HepG2 (cell line): ENCODE measurements at regions of chr3 and their contacts with region 1.

Region 1: DNA sequence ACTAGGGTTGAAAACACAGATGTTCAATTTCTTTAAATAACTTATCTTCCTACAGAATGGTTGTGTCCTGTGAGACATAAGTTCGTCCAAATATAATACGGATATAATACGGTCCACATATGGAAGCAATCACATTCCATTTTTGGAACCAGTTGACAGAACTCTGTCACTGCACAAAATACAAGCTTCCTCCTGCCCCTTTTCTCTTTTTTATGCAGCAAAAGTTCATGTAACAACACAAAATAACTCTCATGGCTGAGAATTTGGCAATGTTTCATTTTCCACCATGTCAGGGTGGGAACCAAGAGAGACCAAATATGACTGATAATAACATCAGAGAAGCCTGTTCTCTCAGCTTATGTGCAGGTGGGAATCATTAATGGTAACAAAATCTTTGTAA is 158.1 kb upstream of the ZNF385D start:
- DNase-seq: no peak
- ATAC-seq: no peak
- H3K4me3 ChIP-seq: no peak overlapping the region
- H3K27ac ChIP-seq: no peak overlapping the region
- H3K4me1 ChIP-seq: no peaks in the 10 kb centered on the region
- H3K27me3 ChIP-seq: no peaks in the 10 kb centered on the region; a peak in 1 of 5 replicates
- CTCF ChIP-seq: no peak
- EP300 ChIP-seq: no peak
- POLR2A ChIP-seq: no peak
- RAD21 ChIP-seq: no peak

Region 2: DNA sequence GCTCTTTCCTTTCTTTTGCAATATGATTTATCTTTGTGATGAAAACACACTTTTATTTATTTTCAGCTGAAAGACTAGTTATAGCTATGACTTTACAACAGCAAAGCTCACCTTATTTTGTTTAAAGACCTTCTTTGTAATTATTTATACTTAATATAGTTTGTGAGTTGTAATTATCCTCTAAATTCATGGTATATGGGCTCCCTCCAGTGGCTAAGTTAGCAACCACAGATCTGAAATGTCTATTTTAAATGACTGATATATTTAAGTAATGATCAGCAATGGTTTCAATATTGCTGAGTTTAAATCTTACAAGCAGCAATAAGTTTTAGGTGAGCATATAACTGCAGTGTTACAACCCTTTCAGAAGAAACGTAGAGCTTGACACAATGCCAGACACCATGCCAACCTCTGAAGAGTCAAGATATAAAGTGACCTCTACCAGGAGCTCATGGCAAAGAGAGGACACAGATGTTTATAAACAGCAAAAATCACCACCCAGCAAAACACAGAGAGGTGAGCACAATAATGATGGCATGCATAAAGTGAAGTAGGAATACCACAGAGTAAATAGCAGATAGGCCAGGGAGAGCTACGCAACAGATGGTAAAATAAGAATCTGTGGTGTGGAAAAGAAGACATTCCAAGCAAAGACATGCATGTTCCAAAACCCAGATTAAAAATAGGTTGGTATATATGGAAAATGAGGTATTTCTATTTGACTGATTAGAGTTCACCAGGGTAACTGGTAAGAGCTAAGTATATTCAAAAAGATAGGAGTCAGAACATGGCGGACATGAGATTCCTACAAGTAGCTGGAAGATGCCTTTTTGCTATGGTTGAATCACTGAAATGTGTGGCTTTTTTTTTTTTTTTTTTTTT is 14.4 kb before region 1 on chr3:
- CTCF ChIA-PET with region 1: no interaction called
- POLR2A ChIA-PET with region 1: no interaction called
- in situ Hi-C with region 1: no loop called
- intact Hi-C with region 1: loop called (anchors 1 kb)
- DNase-seq: no peak
- ATAC-seq: no peak; the same call in 2 of the 3 replicates
- H3K4me3 ChIP-seq: no peak overlapping the region
- H3K27ac ChIP-seq: no peak overlapping the region
- H3K4me1 ChIP-seq: no peaks in the 10 kb centered on the region
- H3K27me3 ChIP-seq: no peaks in the 10 kb centered on the region
- CTCF ChIP-seq: peak; percentile 24; the same call in 1 of the 2 replicates
- EP300 ChIP-seq: no peak
- POLR2A ChIP-seq: no peak
- RAD21 ChIP-seq: no peak